ENCODE measurements at regions of chr5 and their contacts with region 1.

Region 1: GRCh38 chr5:14035859-14036440 is 91.5 kb upstream of the DNAH5 start:
- DNase-seq: peak in 1 of 2 donors; percentile 38
- ATAC-seq: peak; percentile 93 to 95
- H3K4me3 ChIP-seq: peak overlapping the region; percentile 21 to 50 (median 35)
- H3K27ac ChIP-seq: peak overlapping the region; percentile 64 to 76 (median 71)
- H3K4me1 ChIP-seq: peaks cover 18 to 32% of the 10 kb centered on the region in 2 donors
- H3K27me3 ChIP-seq: no peaks in the 10 kb centered on the region
- CTCF ChIP-seq: no peak
- POLR2A ChIP-seq: no peak

Region 2: GRCh38 chr5:13946115-13946514 is 89.8 kb before region 1 on chr5:
- in situ Hi-C with region 1: no loop called
- intact Hi-C with region 1: no loop called
- DNase-seq: no peak
- ATAC-seq: no peak
- H3K4me3 ChIP-seq: no peak overlapping the region
- H3K27ac ChIP-seq: no peak overlapping the region
- H3K4me1 ChIP-seq: no peaks in the 10 kb centered on the region
- H3K27me3 ChIP-seq: no peaks in the 10 kb centered on the region
- CTCF ChIP-seq: no peak
- POLR2A ChIP-seq: no peak

Region 3: DNA sequence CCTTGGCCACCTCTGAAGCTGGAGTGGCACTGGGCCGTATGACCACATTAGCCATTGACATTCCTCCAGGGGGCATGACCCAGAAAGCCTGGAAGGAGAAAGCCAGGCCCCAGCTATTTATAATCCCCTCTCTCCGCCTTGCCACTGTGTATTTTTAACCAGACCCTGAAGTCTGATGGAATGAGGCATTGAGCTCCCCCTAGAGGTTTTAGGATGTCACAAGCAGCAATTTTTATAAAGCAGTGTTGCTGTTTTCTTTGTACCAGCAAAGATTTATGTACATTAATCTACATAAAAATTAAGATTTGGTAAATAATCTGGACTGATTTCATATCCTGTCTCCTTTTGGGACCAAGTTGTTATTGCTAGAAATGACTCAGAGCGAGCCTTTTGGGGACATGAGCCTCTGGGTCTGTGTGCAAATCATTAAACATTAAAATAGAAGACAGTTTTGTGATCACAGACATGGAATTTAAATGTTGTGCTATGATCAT is 234.3 kb after region 1 on chr5:
- in situ Hi-C with region 1: no loop called
- intact Hi-C with region 1: loop called (anchors 10 kb)
- DNase-seq: peak; percentile 40 to 81
- ATAC-seq: peak; percentile 85 to 91
- H3K4me3 ChIP-seq: no peak overlapping the region
- H3K27ac ChIP-seq: peak overlapping the region; percentile 64 to 85 (median 78)
- H3K4me1 ChIP-seq: peaks cover 31 to 37% of the 10 kb centered on the region in 2 donors
- H3K27me3 ChIP-seq: no peaks in the 10 kb centered on the region
- CTCF ChIP-seq: peak; percentile 76 to 85 (median 81)
- POLR2A ChIP-seq: no peak

Measured in gastrocnemius medialis (tissue), 4 donors.